CD8-positive, alpha-beta T cell (primary cell): ENCODE measurements at regions of chrX and their contacts with region 1.

Region 1: GRCh38 chrX:153426756-153427155 is 15.5 kb downstream of the ZFP92 start:
- DNase-seq: no peak
- ATAC-seq: no peak
- H3K4me3 ChIP-seq: no peak overlapping the region
- H3K4me3 Mint-ChIP-seq: no peak overlapping the region
- H3K27ac ChIP-seq: no peak overlapping the region
- H3K27ac Mint-ChIP-seq: no peak overlapping the region
- H3K4me1 ChIP-seq: no peaks in the 10 kb centered on the region
- H3K4me1 Mint-ChIP-seq: no peaks in the 10 kb centered on the region
- H3K27me3 ChIP-seq: no peaks in the 10 kb centered on the region
- H3K27me3 Mint-ChIP-seq: peaks cover 2% of the 10 kb centered on the region
- CTCF ChIP-seq: no peak

Region 2: GRCh38 chrX:153052534-153052933 is 374.2 kb before region 1 on chrX:
- CTCF ChIA-PET with region 1: no interaction called
- POLR2A ChIA-PET with region 1: no interaction called
- intact Hi-C with region 1: no loop called
- DNase-seq: no peak
- ATAC-seq: no peak
- H3K4me3 ChIP-seq: no peak overlapping the region
- H3K4me3 Mint-ChIP-seq: no peak overlapping the region
- H3K27ac ChIP-seq: no peak overlapping the region
- H3K27ac Mint-ChIP-seq: no peak overlapping the region
- H3K4me1 ChIP-seq: no peaks in the 10 kb centered on the region
- H3K4me1 Mint-ChIP-seq: peaks cover 3% of the 10 kb centered on the region
- H3K27me3 ChIP-seq: no peaks in the 10 kb centered on the region
- H3K27me3 Mint-ChIP-seq: peaks cover 2% of the 10 kb centered on the region
- CTCF ChIP-seq: no peak

Region 3: GRCh38 chrX:154804957-154805695 is 1378.4 kb after region 1 on chrX and contains the start of gene MPP1:
- CTCF ChIA-PET with region 1: no interaction called
- POLR2A ChIA-PET with region 1: no interaction called
- intact Hi-C with region 1: loop called in 1 of 2 experiments (anchors 5 kb)
- DNase-seq: peak; percentile 49 to 87 (median 68)
- ATAC-seq: peak; percentile 99
- H3K4me3 ChIP-seq: peak within 1 kb of the TSS; percentile 65 to 79
- H3K4me3 Mint-ChIP-seq: peak within 1 kb of the TSS; percentile 80
- H3K27ac ChIP-seq: no peak within 1 kb of the TSS
- H3K27ac Mint-ChIP-seq: no peak within 1 kb of the TSS
- H3K4me1 ChIP-seq: peaks cover 27% of the 10 kb centered on the region
- H3K4me1 Mint-ChIP-seq: peaks cover 45% of the 10 kb centered on the region
- H3K27me3 ChIP-seq: no peaks in the 10 kb centered on the region
- H3K27me3 Mint-ChIP-seq: no peaks in the 10 kb centered on the region
- CTCF ChIP-seq: no peak
- total RNA-seq, gene MPP1: 6.5 to 6.9 TPM